CD8-positive, alpha-beta T cell (primary cell): ENCODE measurements at regions of chr3 and their contacts with region 1.

Region 1: GRCh38 chr3:150408221-150409102 is at the start of gene TSC22D2:
- DNase-seq: peak; percentile 95 to 99 (median 97)
- ATAC-seq: peak; percentile 70
- H3K4me3 ChIP-seq: peak within 1 kb of the TSS; percentile 85 to 90
- H3K4me3 Mint-ChIP-seq: peak within 1 kb of the TSS; percentile 89
- H3K27ac ChIP-seq: peak within 1 kb of the TSS; percentile 92 to 96
- H3K27ac Mint-ChIP-seq: peak within 1 kb of the TSS; percentile 99
- H3K4me1 ChIP-seq: peaks cover 16% of the 10 kb centered on the region
- H3K4me1 Mint-ChIP-seq: peaks cover 33% of the 10 kb centered on the region
- H3K27me3 ChIP-seq: no peaks in the 10 kb centered on the region
- H3K27me3 Mint-ChIP-seq: no peaks in the 10 kb centered on the region
- CTCF ChIP-seq: no peak
- total RNA-seq, gene TSC22D2: 49.3 to 51.7 TPM

Region 2: DNA sequence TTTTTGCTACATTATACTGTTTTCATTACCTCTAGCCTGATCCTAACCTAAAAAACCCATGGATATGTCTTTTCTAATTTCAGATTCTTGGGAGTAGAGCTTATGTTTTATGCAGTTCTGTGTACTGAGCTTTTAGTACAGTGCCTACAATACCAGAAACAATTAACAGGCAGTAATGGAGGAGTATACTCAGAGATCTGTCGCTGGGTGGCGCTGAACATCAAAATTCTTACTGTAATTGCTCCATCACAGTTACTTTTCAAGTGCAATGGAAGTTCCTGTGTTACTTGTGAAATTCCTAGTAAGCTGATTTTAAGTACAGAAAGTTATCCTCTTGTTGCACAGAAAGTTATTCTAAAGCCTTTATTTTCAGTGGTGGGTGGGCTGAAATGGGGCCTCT is 528.6 kb before region 1 on chr3:
- CTCF ChIA-PET with region 1: no interaction called
- POLR2A ChIA-PET with region 1: no interaction called
- intact Hi-C with region 1: no loop called
- DNase-seq: peak in 4 of 9 experiments; percentile 2 to 38 (median 14)
- ATAC-seq: no peak
- H3K4me3 ChIP-seq: no peak overlapping the region
- H3K4me3 Mint-ChIP-seq: no peak overlapping the region
- H3K27ac ChIP-seq: no peak overlapping the region
- H3K27ac Mint-ChIP-seq: no peak overlapping the region
- H3K4me1 ChIP-seq: no peaks in the 10 kb centered on the region
- H3K4me1 Mint-ChIP-seq: peaks cover 11% of the 10 kb centered on the region
- H3K27me3 ChIP-seq: no peaks in the 10 kb centered on the region
- H3K27me3 Mint-ChIP-seq: no peaks in the 10 kb centered on the region
- CTCF ChIP-seq: peak; percentile 43

Region 3: DNA sequence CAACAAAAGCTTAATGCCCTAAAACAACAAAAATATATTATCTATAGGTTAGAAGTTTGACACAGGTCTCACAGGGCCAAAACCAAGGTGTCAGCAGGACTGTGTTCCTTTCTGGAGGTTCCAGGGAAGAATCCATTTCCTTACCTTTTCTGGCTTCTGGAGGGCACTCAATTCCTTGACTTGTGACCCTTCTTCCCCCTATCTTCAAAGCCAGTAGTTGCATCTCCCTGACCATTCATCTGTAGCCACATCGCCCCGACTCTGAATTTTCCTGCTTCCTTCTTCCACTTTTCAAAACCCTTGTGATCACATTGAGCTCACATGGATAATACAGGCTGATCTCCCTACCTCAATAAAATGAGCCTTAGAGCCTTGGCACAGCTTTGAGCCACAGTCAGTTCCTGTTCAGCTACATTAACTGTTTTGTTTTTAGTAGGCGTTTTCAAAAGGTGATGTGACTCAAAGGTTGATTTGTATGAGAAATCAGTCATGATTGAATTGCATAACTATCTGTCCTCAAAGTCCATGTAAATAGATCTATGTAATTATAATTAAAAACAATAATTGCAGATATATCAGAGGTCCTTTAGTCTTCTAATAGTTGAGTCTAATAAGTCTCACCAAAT is 450.2 kb before region 1 on chr3:
- CTCF ChIA-PET with region 1: no interaction called
- POLR2A ChIA-PET with region 1: interaction called, 3 read pairs
- intact Hi-C with region 1: loop called in 1 of 2 experiments (anchors 5 kb)
- DNase-seq: no peak
- ATAC-seq: no peak
- H3K4me3 ChIP-seq: no peak overlapping the region
- H3K4me3 Mint-ChIP-seq: no peak overlapping the region
- H3K27ac ChIP-seq: no peak overlapping the region
- H3K27ac Mint-ChIP-seq: peak overlapping the region; percentile 24
- H3K4me1 ChIP-seq: peaks cover 10% of the 10 kb centered on the region
- H3K4me1 Mint-ChIP-seq: peaks cover 23% of the 10 kb centered on the region
- H3K27me3 ChIP-seq: no peaks in the 10 kb centered on the region
- H3K27me3 Mint-ChIP-seq: no peaks in the 10 kb centered on the region
- CTCF ChIP-seq: no peak

Region 4: DNA sequence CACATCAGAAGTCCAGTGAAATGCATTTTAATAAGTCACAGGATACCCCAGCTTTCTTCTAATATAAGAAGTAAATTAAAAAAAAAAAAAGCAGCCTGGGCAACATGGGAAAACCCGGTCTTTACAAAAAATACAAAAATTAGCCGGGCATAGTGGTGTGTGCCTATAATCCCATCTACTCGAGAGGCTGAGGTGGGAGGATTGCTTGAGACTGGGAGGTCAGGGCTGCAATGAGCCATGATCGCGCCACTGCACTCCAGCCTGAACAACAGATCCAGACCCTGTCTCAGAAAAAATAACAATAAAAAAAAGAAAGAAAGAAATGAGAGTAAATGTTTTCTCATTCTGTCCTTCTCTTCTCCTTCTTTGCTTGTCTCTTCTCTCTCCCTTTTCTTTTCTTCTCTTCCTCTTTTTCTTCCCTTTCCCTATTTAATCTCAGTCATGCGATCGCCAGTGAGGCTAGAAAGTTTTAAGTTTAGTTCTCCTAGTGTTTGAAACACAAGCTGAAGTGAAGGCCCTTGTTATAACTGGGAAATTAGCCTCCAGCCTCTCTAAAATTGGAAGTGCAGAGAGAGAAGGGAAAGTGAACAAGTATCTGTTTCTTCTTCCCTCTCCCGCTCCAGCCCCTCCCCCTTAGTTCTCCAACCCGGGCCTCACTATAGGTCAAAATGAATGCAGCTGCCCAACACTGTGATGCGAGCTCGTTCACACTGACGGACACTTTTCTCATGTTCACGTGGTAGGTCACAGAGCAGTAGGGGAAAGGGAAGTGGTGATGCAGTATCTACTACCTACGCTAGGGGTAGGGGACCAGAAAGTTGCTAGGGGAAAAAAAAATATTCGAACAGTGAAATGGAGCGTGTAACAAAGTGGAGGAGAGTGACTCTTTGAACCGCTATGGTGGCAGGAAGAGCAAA is 23.9 kb before region 1 on chr3:
- CTCF ChIA-PET with region 1: interaction called, 5 read pairs
- POLR2A ChIA-PET with region 1: interaction called, 7 read pairs
- intact Hi-C with region 1: loop called (anchors 1 to 2 kb)
- DNase-seq: peak; percentile 2 to 84 (median 37)
- ATAC-seq: peak; percentile 99
- H3K4me3 ChIP-seq: peak overlapping the region; percentile 29 to 36
- H3K4me3 Mint-ChIP-seq: peak overlapping the region; percentile 61
- H3K27ac ChIP-seq: no peak overlapping the region
- H3K27ac Mint-ChIP-seq: peak overlapping the region; percentile 69
- H3K4me1 ChIP-seq: peaks cover 18% of the 10 kb centered on the region
- H3K4me1 Mint-ChIP-seq: peaks cover 17% of the 10 kb centered on the region
- H3K27me3 ChIP-seq: no peaks in the 10 kb centered on the region
- H3K27me3 Mint-ChIP-seq: no peaks in the 10 kb centered on the region
- CTCF ChIP-seq: peak; percentile 65

Region 5: GRCh38 chr3:150449169-150449721 is 40.8 kb after region 1 on chr3:
- CTCF ChIA-PET with region 1: no interaction called
- POLR2A ChIA-PET with region 1: no interaction called
- intact Hi-C with region 1: loop called (anchors 5 kb)
- DNase-seq: no peak
- ATAC-seq: no peak
- H3K4me3 ChIP-seq: no peak overlapping the region
- H3K4me3 Mint-ChIP-seq: no peak overlapping the region
- H3K27ac ChIP-seq: no peak overlapping the region
- H3K27ac Mint-ChIP-seq: no peak overlapping the region
- H3K4me1 ChIP-seq: no peaks in the 10 kb centered on the region
- H3K4me1 Mint-ChIP-seq: peaks cover 47% of the 10 kb centered on the region
- H3K27me3 ChIP-seq: no peaks in the 10 kb centered on the region
- H3K27me3 Mint-ChIP-seq: no peaks in the 10 kb centered on the region
- CTCF ChIP-seq: no peak

Region 6: DNA sequence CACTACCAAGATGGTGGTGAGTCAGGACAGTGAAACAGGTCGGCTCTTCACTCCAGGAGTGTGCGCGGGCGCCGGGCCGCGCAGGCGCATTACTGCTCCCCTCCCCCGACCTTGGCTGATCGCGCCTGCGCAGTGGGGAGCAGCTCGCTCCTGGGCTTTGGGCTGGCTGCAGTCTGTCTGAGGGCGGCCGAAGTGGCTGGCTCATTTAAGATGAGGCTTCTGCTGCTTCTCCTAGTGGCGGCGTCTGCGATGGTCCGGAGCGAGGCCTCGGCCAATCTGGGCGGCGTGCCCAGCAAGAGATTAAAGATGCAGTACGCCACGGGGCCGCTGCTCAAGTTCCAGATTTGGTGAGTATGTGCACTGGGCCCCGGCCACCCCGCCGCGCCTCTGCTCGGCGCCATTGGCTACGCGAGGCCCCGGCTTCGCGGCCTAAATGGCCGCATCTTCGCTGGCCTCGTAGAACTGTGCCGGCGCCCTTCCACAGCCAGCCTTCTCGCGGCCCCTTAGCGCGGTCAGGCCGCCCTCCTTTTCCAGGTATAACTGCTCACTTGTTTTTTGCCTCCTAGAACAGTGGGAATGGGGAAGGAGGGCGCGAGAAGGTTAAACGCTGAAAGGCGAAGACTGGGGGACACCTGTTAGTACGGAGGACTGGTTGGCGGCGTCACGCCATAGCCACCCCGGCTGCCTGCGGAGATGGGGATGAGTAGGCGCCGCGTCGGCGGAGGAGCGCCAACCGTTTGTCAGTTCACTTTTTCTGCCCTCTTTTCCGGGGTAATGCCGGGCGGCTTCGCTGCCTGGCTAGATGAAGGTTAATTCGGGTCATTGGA is 194.9 kb after region 1 on chr3 and contains the start of gene SELENOT:
- CTCF ChIA-PET with region 1: no interaction called
- POLR2A ChIA-PET with region 1: interaction called, 11 read pairs
- intact Hi-C with region 1: loop called (anchors 1 to 2 kb)
- DNase-seq: peak; percentile 88 to 98 (median 94)
- ATAC-seq: peak; percentile 81
- H3K4me3 ChIP-seq: peak within 1 kb of the TSS; percentile 79 to 86
- H3K4me3 Mint-ChIP-seq: peak within 1 kb of the TSS; percentile 99
- H3K27ac ChIP-seq: peak within 1 kb of the TSS; percentile 88 to 95
- H3K27ac Mint-ChIP-seq: peak within 1 kb of the TSS; percentile 100
- H3K4me1 ChIP-seq: peaks cover 43% of the 10 kb centered on the region
- H3K4me1 Mint-ChIP-seq: peaks cover 71% of the 10 kb centered on the region
- H3K27me3 ChIP-seq: no peaks in the 10 kb centered on the region
- H3K27me3 Mint-ChIP-seq: no peaks in the 10 kb centered on the region
- CTCF ChIP-seq: no peak
- total RNA-seq, gene SELENOT: 130 to 139 TPM

Region 7: DNA sequence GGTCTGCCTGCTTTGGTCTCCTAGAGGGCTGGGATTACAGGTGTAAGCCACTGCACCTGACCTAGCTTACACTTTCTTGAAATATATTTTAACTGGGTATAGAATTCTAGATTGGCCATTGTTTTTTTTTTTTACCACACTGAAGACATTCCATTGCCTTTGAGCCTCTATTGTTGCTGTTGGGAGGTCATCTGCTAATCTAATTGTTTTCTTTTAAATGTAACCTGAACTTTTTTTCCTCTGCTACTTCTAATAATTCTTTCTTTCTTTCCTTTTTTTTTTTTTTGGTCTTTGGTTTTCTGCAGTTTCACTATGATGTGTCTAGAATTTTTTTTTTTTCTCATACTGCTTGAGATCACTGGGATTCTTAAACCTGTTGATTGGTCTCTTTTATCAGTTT is 267.1 kb after region 1 on chr3:
- CTCF ChIA-PET with region 1: no interaction called
- POLR2A ChIA-PET with region 1: no interaction called
- intact Hi-C with region 1: no loop called
- DNase-seq: no peak
- ATAC-seq: no peak
- H3K4me3 ChIP-seq: no peak overlapping the region
- H3K4me3 Mint-ChIP-seq: no peak overlapping the region
- H3K27ac ChIP-seq: no peak overlapping the region
- H3K27ac Mint-ChIP-seq: no peak overlapping the region
- H3K4me1 ChIP-seq: no peaks in the 10 kb centered on the region
- H3K4me1 Mint-ChIP-seq: peaks cover 1% of the 10 kb centered on the region
- H3K27me3 ChIP-seq: no peaks in the 10 kb centered on the region
- H3K27me3 Mint-ChIP-seq: no peaks in the 10 kb centered on the region
- CTCF ChIP-seq: no peak